Gastrocnemius medialis (tissue), 4 donors: ENCODE measurements at regions of chr11 and their contacts with region 1.

Region 1: DNA sequence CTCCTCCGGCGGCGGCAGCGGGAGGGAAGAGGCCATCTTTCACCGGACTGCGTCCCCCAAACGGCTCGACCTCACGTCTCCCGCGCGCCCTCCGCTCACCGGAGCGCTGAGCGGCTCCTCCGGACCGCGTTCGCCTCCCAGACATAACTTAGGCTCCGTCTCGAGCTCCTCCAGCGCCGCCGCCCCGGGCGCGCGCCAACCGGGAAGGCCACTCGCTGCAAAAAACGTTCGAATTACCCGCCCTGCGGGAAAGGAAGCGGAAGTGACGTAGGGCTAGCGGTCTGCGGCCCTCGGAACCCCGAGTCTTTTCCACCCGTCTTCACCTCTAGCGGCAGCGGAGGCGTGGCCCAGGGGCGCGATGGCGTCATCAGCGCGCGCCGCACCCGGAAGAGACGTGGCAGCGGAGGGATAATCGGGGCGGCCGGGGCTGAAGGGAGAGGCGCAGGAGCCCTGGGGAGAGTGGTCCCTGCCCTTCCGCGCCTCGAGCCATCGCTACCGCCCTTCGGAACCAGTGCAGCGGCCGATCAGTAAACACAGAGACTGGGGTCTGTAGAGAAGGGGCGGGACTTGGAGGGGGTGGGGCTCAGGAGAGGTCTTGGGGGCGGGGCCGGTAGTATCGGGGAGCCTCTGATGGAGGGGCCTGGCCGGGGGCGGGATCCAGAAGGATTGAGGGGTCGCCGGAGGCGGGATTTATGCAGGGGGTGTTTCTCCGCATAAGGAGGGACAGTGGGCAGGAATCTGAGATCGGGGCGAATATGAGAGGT is at the starts of genes CDCA5 and ZFPL1:
- DNase-seq: peak; percentile 90 to 93
- ATAC-seq: peak; percentile 98 to 99
- H3K4me3 ChIP-seq: peak within 1 kb of the TSS; percentile 71 to 95 (median 81)
- H3K27ac ChIP-seq: peak within 1 kb of the TSS; percentile 90 to 98 (median 91)
- H3K4me1 ChIP-seq: peaks cover 12 to 18% of the 10 kb centered on the region in 2 donors
- H3K27me3 ChIP-seq: no peaks in the 10 kb centered on the region
- CTCF ChIP-seq: peak in 1 of 5 experiments; percentile 4
- POLR2A ChIP-seq: peak; percentile 12 to 52
- total RNA-seq, gene CDCA5: 0.36 to 1.3 (median 1.00) TPM in 3 of 4 donors, not detected in the other
- total RNA-seq, gene ZFPL1: 35.7 to 42.0 (median 40.6) TPM

Region 2: GRCh38 chr11:65019824-65020223 is 64.2 kb before region 1 on chr11:
- in situ Hi-C with region 1: no loop called
- intact Hi-C with region 1: no loop called
- DNase-seq: no peak
- ATAC-seq: no peak
- H3K4me3 ChIP-seq: no peak overlapping the region
- H3K27ac ChIP-seq: no peak overlapping the region
- H3K4me1 ChIP-seq: peaks cover 7 to 11% of the 10 kb centered on the region in 2 donors
- H3K27me3 ChIP-seq: no peaks in the 10 kb centered on the region
- CTCF ChIP-seq: no peak
- POLR2A ChIP-seq: no peak

Region 3: GRCh38 chr11:65040847-65041621 is 43.0 kb before region 1 on chr11 and contains the start of gene SAC3D1:
- in situ Hi-C with region 1: no loop called
- intact Hi-C with region 1: loop called (anchors 5 kb)
- DNase-seq: peak; percentile 73 to 89
- ATAC-seq: peak; percentile 96
- H3K4me3 ChIP-seq: peak within 1 kb of the TSS; percentile 56 to 94 (median 70)
- H3K27ac ChIP-seq: peak within 1 kb of the TSS; percentile 87 to 98 (median 92)
- H3K4me1 ChIP-seq: peaks cover 14 to 21% of the 10 kb centered on the region in 2 donors
- H3K27me3 ChIP-seq: no peaks in the 10 kb centered on the region
- CTCF ChIP-seq: no peak
- POLR2A ChIP-seq: peak; percentile 19 to 52
- total RNA-seq, gene SAC3D1: 9.0 to 27.2 (median 14.4) TPM

Region 4: GRCh38 chr11:65095974-65096806 is 12.2 kb after region 1 on chr11 and contains the start of gene VPS51:
- in situ Hi-C with region 1: no loop called
- intact Hi-C with region 1: loop called (anchors 1 kb)
- DNase-seq: peak; percentile 81 to 88
- ATAC-seq: peak; percentile 93 to 96
- H3K4me3 ChIP-seq: peak within 1 kb of the TSS; percentile 88 to 96 (median 89)
- H3K27ac ChIP-seq: peak within 1 kb of the TSS; percentile 91 to 97 (median 93)
- H3K4me1 ChIP-seq: peaks cover 34 to 36% of the 10 kb centered on the region in 2 donors
- H3K27me3 ChIP-seq: no peaks in the 10 kb centered on the region
- CTCF ChIP-seq: peak in 3 of 5 experiments; percentile 12 to 48 (median 32)
- POLR2A ChIP-seq: peak; percentile 47 to 72
- total RNA-seq, gene VPS51: 206 to 515 (median 266) TPM

Region 5: DNA sequence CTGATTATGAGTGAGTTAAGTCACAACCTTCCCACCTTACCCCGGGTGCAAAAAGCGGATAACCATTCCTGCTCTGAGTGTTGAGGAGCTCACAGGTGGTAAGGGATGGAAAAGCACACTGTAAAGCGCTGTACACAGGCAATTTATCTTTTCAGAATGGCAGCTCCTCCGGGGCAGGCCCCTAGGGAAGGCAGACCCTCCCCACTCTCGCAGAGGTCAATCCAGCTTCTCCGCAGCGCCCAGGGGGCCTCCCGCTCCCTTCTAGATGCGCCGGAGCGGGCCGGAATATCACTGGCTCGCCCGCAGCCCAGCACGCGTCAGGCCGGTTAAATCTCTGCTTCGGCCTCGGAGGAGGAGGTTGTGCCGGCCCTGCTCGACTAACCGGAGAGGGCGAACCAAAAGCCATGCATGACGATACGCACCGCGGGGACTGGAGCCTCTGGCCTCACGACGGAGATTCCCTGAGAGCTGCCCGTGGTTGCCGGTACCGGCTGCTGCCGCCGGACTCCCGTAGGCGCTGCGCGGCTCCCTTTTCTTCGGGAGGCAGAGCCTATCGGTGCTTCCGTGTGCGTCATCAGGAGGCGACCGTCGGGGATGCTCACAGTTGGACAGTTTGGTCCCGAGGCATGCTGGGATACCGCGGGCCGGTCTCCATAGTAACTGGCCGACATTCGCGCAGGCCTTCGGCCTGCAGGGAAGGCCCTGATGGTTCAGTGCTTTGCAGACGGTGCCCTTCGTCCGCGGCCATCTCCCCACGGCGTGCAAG is 1260.7 kb after region 1 on chr11 and contains the start of gene BRMS1:
- in situ Hi-C with region 1: no loop called
- intact Hi-C with region 1: loop called (anchors 1 kb)
- DNase-seq: peak; percentile 98
- ATAC-seq: peak; percentile 83 to 86
- H3K4me3 ChIP-seq: peak within 1 kb of the TSS; percentile 83 to 97 (median 93)
- H3K27ac ChIP-seq: peak within 1 kb of the TSS; percentile 80 to 91 (median 87)
- H3K4me1 ChIP-seq: peaks cover 35 to 36% of the 10 kb centered on the region in 2 donors
- H3K27me3 ChIP-seq: no peaks in the 10 kb centered on the region
- CTCF ChIP-seq: peak in 4 of 5 experiments; percentile 35 to 57 (median 48)
- POLR2A ChIP-seq: peak; percentile 92 to 96
- total RNA-seq, gene BRMS1: 40.1 to 73.5 (median 64.8) TPM